ENCODE measurements at regions of chr2 and their contacts with region 1.

Region 1: DNA sequence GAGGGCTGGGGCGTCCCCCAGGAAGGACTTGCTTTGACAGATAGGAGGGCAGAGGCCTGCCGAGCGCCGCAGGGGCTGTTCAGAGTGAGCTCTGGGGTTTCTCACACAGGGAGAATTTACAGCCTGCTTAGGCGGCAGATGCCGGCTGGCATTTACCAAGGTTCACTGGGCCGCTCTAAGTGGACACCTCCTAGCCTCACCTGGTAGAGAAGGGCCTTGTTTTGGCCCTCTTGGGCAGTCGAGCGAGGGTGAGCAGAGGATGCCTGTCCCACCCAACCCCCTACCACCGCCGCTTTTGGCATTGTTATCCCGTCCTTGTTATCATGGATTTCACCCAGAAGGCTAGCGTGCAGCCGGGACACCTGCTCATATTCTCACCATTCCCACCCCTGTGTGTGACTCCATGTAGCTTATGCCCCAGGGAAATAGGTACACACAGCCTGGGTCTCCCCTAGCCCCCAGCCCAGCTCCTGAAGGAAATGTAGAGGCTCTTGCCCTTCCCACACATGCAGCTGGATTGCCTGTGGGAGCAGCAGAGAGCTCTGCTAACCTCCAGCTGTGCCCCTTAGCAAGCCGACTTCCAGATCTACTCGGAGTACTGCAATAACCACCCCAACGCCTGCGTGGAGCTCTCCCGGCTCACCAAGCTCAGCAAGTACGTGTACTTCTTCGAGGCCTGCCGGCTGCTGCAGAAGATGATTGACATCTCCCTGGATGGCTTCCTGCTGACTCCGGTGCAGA is 52.4 kb downstream of the FAM168B start:
- DNase-seq: no peak
- ATAC-seq: peak; percentile 44
- H3K4me3 Mint-ChIP-seq: peak overlapping the region; percentile 83
- H3K27ac Mint-ChIP-seq: peak overlapping the region; percentile 91
- H3K4me1 Mint-ChIP-seq: peaks cover 17% of the 10 kb centered on the region
- H3K27me3 Mint-ChIP-seq: peaks cover 8% of the 10 kb centered on the region

Region 2: DNA sequence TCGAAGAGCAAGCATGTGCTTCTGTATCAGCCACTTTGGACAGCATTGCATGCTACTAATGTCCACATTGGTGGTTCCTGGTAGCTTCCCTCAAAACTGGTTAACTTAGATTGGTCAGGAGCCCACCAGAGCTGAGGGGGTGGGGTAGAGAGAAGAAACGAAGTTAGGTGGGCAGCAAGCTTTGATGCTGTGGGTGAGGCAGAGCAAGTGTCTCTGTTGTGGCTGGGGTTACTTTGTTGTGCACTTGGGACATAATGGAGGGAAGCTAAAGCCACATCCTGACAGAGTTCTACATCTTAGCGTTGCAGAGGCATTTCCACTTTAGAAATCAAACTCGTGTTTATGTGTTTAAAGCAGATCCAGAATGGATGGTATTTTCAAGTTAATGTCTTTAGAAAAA is 30.3 kb before region 1 on chr2:
- POLR2A ChIA-PET with region 1: interaction called, 28 read pairs
- DNase-seq: peak; percentile 61
- ATAC-seq: peak; percentile 93
- H3K4me3 Mint-ChIP-seq: peak overlapping the region; percentile 75
- H3K27ac Mint-ChIP-seq: peak overlapping the region; percentile 96
- H3K4me1 Mint-ChIP-seq: peaks cover 35% of the 10 kb centered on the region
- H3K27me3 Mint-ChIP-seq: peaks cover 5% of the 10 kb centered on the region

Region 3: GRCh38 chr2:131093006-131093695 is 52.3 kb after region 1 on chr2 and contains the start of gene FAM168B:
- POLR2A ChIA-PET with region 1: interaction called, 26 read pairs
- DNase-seq: peak; percentile 97
- ATAC-seq: peak; percentile 84
- H3K4me3 Mint-ChIP-seq: peak within 1 kb of the TSS; percentile 96
- H3K27ac Mint-ChIP-seq: peak within 1 kb of the TSS; percentile 98
- H3K4me1 Mint-ChIP-seq: peaks cover 17% of the 10 kb centered on the region
- H3K27me3 Mint-ChIP-seq: peaks cover 2% of the 10 kb centered on the region
- total RNA-seq, gene FAM168B: 63.0 to 67.9 TPM

Measured in activated naive CD8-positive, alpha-beta T cell treated with anti-CD3 and anti-CD28 coated beads, Interleukin-2, amount 10 ng/mL, durations not matched to agents 7 days and 5 days (primary cell).